ENCODE measurements at regions of chr11 and their contacts with region 1.

Region 1: DNA sequence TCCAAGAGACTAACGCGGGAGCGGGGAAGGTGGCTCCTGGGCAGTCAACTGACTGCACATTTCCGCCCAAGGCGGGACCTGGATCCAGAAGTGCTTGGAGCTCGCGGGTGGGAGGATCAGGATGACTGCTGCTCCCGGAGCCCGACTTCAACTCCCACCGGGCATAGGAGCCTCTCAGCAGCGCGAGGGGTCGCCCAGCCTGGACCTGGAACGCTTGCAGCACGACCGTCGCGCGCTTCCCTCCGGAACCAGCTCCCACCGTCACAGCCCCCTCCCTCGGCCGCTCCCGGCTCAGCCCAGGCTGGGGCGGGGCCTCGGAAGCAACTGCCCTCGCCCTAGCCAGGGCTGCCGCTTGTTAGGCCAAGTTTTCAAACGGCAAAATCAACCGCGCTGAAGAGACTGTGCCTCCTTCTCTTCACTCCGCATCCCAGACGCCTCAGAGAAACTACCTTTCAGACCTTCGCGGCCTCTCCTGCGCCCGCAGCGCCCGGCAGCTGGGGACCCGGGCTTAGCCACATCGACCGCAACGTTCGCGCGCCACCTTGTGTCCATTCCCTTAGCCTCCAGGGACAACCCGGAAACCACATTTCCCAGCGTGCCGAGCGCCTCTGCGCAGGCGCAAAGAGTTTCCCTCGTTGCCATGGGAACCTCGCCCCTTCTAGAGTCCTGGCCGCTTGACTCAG is 14.0 kb downstream of the SSH3 start:
- DNase-seq: peak; percentile 99
- ATAC-seq: peak; percentile 83
- H3K4me3 Mint-ChIP-seq: peak overlapping the region; percentile 84
- H3K27ac Mint-ChIP-seq: peak overlapping the region; percentile 95
- H3K4me1 Mint-ChIP-seq: peaks cover 28% of the 10 kb centered on the region
- H3K27me3 Mint-ChIP-seq: peaks cover 3% of the 10 kb centered on the region

Region 2: GRCh38 chr11:67239783-67240575 is 77.4 kb before region 1 on chr11:
- CTCF ChIA-PET with region 1: interaction called, 7 read pairs
- POLR2A ChIA-PET with region 1: interaction called, 3 read pairs
- intact Hi-C with region 1: loop called in 1 of 2 experiments (anchors 1 kb)
- DNase-seq: peak; percentile 98
- ATAC-seq: peak; percentile 94
- H3K4me3 Mint-ChIP-seq: peak overlapping the region; percentile 98
- H3K27ac Mint-ChIP-seq: peak overlapping the region; percentile 99
- H3K4me1 Mint-ChIP-seq: peaks cover 43% of the 10 kb centered on the region
- H3K27me3 Mint-ChIP-seq: no peaks in the 10 kb centered on the region

Region 3: DNA sequence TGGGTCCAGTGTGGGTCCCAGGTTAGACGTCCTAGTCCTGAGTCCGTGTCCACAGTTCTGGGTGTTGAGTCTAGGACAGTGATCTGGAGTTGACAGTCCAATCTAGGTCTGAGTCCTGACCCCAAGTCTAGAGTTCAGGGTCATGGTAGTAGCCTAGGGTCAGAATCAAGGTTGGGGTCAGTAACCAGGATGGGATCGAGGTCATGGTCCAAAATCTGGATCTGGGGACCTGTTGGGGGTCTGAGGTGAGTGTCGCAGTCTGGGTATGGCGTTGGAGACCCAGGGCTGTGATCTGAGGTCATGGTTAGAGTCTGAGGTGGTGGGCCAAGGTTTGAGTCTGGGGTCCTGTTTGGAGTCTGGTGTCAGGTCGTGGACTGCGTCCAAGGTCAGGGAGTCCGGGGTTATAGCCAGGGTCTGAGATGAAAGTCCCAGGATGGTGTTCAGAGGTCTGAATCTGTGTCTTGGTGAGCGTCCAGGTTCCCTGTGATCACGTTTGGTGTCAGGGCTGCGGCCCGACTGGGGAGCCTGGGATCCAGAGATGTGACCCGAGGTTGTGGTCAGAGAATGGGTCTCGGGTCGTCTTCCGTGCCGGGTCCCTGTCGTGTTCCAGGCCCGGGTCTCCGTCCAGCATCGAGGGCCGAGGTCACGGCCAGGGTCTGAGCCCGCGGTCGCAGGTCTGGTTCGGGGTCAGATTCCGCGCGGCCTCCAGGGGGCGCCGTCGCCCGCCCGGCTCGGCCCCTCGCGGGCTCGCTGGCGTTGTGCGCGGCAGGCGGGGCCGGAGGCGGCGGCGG is 51.5 kb before region 1 on chr11:
- CTCF ChIA-PET with region 1: interaction called, 44 read pairs
- POLR2A ChIA-PET with region 1: interaction called, 8 read pairs
- intact Hi-C with region 1: loop called (anchors 1 kb)
- DNase-seq: peak; percentile 87
- ATAC-seq: peak; percentile 18
- H3K4me3 Mint-ChIP-seq: peak overlapping the region; percentile 72
- H3K27ac Mint-ChIP-seq: peak overlapping the region; percentile 90
- H3K4me1 Mint-ChIP-seq: peaks cover 78% of the 10 kb centered on the region
- H3K27me3 Mint-ChIP-seq: no peaks in the 10 kb centered on the region

Region 4: DNA sequence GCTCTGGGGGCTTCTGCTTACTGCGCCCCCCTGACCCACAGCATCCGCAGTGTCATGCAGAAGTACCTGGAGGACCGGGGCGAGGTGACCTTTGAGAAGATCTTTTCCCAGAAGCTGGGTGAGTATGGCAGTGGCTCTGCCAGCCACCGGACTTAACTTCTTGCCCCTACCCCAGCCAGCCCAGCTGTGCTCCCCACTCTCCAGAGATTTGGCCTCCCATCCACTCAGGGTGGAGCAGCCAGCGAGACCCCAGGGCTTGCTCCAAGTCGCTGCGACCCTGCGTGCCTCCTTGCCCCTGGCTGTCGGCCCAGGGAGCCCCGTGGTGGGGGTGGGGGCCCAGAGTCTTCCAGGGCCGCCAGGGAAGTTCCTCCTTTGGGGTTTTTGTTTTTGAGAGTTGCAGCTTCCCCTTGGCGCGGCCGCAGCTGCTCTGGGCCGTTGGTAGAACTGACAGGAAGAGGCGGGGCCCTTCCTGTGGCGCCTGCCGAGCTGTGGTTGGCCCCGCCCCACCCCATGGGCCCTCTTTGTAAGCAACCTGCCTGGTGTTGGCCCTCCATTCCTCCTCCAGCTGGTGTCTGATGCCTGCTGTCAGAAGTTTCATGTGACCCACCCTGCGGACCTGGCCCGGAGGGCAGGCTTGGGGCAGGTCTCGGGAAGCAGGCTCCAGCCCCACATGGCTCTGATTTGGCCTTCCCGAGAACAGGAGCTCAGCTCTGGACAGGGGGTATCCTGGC is 40.0 kb before region 1 on chr11:
- CTCF ChIA-PET with region 1: interaction called, 11 read pairs
- POLR2A ChIA-PET with region 1: interaction called, 4 read pairs
- intact Hi-C with region 1: loop called in 1 of 2 experiments (anchors 1 kb)
- DNase-seq: peak; percentile 95
- ATAC-seq: peak; percentile 88
- H3K4me3 Mint-ChIP-seq: peak overlapping the region; percentile 76
- H3K27ac Mint-ChIP-seq: peak overlapping the region; percentile 99
- H3K4me1 Mint-ChIP-seq: peaks cover 68% of the 10 kb centered on the region
- H3K27me3 Mint-ChIP-seq: no peaks in the 10 kb centered on the region

Region 5: DNA sequence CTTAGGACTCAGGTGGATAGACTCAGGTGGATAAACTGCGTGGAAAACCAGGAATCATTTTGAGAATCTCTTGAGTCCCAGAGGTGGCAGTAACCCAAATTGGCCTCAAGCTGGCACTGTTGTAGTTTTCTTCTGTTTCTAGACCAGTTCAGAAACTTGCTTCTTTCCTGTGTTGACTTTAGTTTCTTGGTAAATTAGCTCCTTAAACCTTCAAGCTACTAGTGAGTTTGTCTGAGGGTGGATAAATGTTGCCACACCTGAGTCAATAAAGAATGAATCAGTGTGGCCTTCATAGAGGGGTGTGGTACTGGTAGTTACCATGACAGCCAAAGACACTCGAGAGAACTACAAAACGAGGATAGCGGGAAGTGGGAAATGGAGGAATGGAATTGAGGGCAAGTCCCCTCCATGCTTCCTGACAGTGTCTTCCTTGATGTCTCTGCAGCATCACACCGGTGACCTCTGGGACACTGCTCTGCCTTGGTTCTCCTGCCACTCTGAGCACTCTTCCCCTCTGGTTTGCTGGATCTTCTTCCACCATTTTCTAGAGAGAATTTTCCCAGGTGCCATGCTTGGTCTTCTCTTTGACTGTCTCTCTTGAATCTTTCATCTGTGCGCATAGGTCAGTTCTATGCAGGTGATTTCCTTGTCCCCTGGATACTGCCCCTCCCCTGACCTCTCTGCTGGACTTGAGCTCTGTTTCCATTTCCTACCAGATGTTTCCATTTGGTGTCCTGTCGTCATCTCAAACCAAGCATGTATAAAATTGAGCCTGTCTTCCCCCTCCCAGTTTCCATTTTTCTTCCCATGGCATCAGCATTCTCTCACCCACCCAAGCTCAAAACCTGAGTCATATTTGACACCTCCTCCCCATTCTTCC is 28.8 kb after region 1 on chr11:
- CTCF ChIA-PET with region 1: interaction called, 39 read pairs
- POLR2A ChIA-PET with region 1: no interaction called
- intact Hi-C with region 1: no loop called
- DNase-seq: peak; percentile 45
- ATAC-seq: peak; percentile 77
- H3K4me3 Mint-ChIP-seq: no peak overlapping the region
- H3K27ac Mint-ChIP-seq: peak overlapping the region; percentile 89
- H3K4me1 Mint-ChIP-seq: peaks cover 55% of the 10 kb centered on the region
- H3K27me3 Mint-ChIP-seq: no peaks in the 10 kb centered on the region

Region 6: DNA sequence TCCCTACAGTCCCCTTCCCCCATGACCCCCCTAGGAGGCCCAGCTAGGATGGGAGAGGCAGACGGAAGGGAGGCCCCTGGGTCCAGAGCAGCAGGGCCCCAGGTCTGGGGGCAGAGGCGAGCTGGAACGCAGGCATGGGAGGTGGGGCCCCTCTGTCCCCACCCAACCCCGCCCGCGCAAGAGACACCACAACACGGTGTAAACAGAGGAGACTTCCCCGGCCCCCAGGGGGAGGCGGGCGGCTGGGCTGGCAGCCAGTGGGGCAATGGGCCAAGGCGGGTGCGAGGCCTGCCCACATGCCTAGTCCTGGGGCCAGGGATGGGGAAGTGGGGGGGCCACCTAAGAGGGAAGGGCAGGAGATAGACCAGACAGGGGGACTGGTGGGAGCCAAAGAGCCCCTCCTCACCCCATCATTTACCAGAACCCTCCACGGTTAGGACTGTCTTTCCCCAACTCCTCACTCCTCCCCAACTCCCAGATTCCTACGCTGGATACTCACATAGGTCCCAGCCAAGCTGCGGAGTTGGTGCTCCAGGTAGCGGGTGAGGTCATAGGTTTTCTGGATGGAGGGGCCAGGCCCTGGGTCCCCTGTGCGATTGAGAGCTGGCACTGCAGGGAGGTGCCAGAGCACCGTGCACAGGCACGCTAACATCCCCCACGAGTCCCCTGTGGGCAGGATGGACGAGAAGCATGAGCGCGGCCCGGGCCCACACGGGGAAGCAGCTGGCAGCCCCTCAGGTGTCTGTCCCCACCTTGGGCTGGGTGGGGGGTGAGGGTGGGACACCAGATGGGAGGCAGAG is 49.8 kb after region 1 on chr11:
- CTCF ChIA-PET with region 1: no interaction called
- POLR2A ChIA-PET with region 1: no interaction called
- intact Hi-C with region 1: no loop called
- DNase-seq: no peak
- ATAC-seq: no peak
- H3K4me3 Mint-ChIP-seq: no peak overlapping the region
- H3K27ac Mint-ChIP-seq: no peak overlapping the region
- H3K4me1 Mint-ChIP-seq: peaks cover 47% of the 10 kb centered on the region
- H3K27me3 Mint-ChIP-seq: peaks cover 20% of the 10 kb centered on the region

Region 7: DNA sequence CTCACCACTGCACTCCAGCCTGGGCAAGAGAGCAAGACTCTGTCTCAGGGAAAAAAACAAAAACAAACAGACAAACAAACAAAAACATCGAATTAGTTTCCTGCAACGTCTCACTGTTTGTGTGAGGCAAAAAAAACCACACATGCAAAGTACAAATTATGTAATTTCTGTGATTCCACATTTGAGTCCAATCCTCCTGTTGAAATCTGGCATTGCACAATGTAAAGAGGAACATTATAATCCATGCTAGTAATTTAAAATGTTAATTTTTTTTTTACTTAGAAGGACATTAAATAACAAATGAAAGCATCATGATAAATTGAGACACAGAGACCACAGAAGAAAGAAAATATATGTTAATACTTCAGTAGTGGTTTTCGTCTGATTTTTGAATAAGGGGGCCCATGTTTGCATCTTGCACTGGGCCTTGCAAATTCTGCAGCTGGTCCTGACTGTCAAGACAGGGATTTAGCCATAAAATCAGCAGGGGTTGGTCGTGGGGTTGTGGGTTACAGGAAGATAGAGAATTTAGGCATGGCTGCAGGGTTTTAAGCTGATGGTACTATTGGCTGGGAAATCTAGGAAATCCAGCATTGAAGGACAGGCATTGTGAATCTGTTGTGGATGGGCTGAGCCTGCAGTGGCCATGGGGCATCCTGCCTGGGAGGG is 459.6 kb after region 1 on chr11:
- CTCF ChIA-PET with region 1: no interaction called
- POLR2A ChIA-PET with region 1: no interaction called
- intact Hi-C with region 1: no loop called
- DNase-seq: no peak
- ATAC-seq: no peak
- H3K4me3 Mint-ChIP-seq: no peak overlapping the region
- H3K27ac Mint-ChIP-seq: no peak overlapping the region
- H3K4me1 Mint-ChIP-seq: no peaks in the 10 kb centered on the region
- H3K27me3 Mint-ChIP-seq: peaks cover 12% of the 10 kb centered on the region

Measured in activated CD4-positive, alpha-beta T cell treated with anti-CD3 and anti-CD28 coated beads for 36 hours (primary cell).